ENCODE measurements at regions of chr1 and their contacts with region 1.

Region 1: DNA sequence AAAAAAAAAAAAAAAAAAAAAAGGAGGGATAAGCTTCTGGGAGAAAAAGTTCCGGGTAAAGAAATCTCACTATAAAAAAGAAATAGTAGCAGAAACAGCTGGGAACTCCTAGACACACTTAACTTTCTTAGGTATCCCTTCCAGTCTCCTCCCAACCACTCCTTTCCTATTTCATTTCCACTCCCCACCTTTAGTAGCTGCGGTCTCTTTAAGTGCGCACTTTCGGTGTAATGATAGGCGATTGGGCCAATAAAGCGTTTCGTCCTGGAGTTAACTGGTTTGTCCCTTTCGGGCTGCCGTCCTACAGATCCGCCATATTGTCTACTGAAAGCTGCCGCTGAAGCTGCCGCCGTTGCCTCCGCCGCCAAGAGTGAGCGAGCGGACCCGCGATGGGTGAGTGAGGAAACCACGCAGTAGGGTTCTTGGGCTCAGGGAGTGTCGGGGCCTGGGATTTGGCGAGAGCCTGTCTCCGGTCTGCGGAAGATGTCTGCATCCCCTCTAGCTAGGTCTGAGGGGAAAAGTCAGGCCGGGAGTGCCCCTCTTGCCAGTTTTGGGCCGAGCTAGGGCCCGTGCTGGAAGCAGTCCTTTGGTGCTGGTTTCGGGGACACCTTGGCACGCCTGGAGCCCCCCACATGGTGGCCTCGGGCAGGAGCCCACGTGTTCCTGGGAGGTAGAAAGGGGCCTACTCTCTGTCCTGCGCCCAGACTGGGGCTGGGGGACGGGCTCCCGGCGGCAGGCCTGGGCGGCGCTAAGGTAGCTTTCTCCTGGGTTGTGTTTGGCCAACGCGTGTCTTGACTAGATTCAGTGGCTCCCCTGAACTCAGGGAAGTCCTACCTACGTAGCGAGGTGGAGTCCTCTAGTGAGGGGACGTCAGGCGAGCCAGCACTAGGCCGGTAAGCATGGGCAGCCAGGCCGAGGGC is at the start of gene KPNA6:
- DNase-seq: peak; percentile 88
- H3K4me3 ChIP-seq: peak within 1 kb of the TSS; percentile 89
- CTCF ChIP-seq: no peak

Region 2: DNA sequence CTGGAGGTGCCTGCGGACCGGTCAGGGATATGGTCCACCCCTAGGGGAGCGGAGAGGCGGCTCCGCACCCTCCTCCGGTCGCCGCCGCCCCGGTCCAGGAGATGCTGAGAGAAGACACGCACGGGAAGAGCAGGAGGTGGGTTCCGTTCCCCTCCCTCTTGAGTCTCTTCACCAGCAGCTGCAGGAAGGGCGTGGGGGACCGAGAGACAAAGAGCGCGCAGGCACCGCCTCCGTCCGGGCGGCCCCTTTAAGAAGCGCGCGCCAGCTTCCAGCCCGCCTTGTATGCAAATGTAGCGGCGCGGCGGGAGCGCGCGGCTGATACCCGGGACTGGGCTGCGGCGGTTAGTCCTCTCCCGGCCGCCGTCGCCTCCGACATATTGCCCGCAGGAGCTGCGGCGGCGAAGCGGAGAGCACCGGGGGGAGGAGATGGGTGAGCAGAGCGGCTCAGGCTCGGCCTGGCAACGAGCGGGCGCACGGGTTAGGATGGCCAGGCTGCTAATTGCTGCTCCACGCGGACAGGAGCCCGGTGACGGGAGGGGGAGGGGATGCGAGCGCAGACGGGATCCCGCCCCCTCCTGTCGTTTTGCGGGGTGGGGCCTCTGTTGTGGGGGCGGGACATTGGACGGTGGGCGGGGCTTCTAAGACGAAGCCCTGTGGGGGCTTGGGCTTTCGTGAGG is 35.2 kb before region 1 on chr1 and contains the start of gene TMEM39B:
- CTCF ChIA-PET with region 1: interaction called, 5 read pairs
- POLR2A ChIA-PET with region 1: interaction called, 15 read pairs
- DNase-seq: no peak
- H3K4me3 ChIP-seq: peak within 1 kb of the TSS; percentile 95
- CTCF ChIP-seq: no peak

Region 3: DNA sequence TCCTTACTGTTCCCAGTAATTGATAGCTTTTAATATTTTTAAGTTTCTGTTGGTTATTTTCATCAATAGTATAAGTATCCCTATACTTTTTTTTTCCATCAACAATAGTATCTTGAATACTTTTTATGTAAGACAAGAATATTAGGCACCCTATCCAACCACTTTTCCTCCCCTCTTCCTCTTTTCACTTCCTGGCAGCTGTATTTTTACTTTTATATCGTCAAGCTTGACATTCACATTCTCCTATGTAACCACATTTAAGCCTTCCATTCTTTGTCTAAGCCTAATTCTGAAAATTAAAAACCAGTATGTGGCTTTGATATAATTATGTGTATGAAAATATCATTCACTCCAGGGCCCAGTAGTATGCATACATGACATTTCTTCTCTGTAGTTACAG is 26.0 kb before region 1 on chr1:
- CTCF ChIA-PET with region 1: interaction called, 13 read pairs
- POLR2A ChIA-PET with region 1: no interaction called
- DNase-seq: no peak
- H3K4me3 ChIP-seq: no peak overlapping the region
- CTCF ChIP-seq: no peak

Region 4: DNA sequence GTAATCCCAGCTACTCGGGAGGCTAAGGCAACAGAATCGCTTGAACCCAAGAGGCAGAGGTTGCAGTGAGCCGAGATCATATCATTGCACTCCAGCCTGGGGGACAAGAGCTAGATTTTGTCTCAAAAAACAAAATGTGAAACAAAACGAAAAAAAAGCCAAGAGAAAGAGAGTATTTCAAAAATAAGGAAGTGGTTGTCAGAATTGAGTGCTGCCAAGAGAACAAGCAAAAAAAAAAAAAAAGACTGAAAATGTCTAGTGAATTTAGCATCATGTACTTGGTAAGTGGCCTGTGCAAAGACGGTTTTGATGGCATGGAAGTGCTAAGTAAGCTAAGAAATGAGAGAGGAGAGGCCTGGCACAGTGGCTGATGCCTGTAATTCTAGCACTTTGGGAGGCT is 14.1 kb after region 1 on chr1:
- CTCF ChIA-PET with region 1: interaction called, 67 read pairs
- POLR2A ChIA-PET with region 1: no interaction called
- DNase-seq: no peak
- H3K4me3 ChIP-seq: no peak overlapping the region
- CTCF ChIP-seq: no peak

Region 5: DNA sequence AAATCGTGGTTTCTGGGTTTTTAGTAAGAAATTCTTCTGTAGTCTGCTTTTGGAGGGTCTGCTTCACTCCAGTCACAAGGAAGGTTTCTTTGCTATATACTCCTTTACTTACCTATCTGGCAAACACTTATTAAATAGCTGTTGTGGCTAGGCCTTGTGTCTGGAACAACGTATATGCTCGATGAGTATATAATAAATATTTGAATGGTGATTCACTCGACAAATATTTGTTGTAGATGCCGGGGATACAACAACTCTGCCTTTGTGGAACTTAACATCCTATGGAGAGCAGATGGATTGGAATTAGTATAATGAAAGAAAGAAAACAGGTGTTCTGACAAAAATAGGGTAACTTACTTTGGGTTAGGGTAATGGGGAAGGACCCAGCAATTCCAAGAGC is 30.9 kb after region 1 on chr1:
- CTCF ChIA-PET with region 1: interaction called, 11 read pairs
- POLR2A ChIA-PET with region 1: interaction called, 4 read pairs
- DNase-seq: no peak
- H3K4me3 ChIP-seq: no peak overlapping the region
- CTCF ChIP-seq: no peak

Region 6: GRCh38 chr1:32413507-32414185 is 305.6 kb after region 1 on chr1:
- CTCF ChIA-PET with region 1: no interaction called
- POLR2A ChIA-PET with region 1: no interaction called
- DNase-seq: no peak
- H3K4me3 ChIP-seq: no peak overlapping the region
- CTCF ChIP-seq: peak; percentile 66